ENCODE measurements at regions of chr4 and their contacts with region 1.

Region 1: GRCh38 chr4:122151982-122152710 is at the start of gene BLTP1:
- DNase-seq: peak; percentile 73 to 94 (median 84)
- ATAC-seq: peak; percentile 88
- H3K4me3 ChIP-seq: peak within 1 kb of the TSS; percentile 93
- H3K4me3 Mint-ChIP-seq: peak within 1 kb of the TSS; percentile 94
- H3K27ac ChIP-seq: peak within 1 kb of the TSS; percentile 81 to 89
- H3K27ac Mint-ChIP-seq: peak within 1 kb of the TSS; percentile 94
- H3K4me1 ChIP-seq: peaks cover 11% of the 10 kb centered on the region
- H3K4me1 Mint-ChIP-seq: peaks cover 77% of the 10 kb centered on the region
- H3K27me3 ChIP-seq: no peaks in the 10 kb centered on the region
- H3K27me3 Mint-ChIP-seq: no peaks in the 10 kb centered on the region
- CTCF ChIP-seq: no peak
- total RNA-seq, gene BLTP1: 86.9 to 93.6 TPM

Region 2: DNA sequence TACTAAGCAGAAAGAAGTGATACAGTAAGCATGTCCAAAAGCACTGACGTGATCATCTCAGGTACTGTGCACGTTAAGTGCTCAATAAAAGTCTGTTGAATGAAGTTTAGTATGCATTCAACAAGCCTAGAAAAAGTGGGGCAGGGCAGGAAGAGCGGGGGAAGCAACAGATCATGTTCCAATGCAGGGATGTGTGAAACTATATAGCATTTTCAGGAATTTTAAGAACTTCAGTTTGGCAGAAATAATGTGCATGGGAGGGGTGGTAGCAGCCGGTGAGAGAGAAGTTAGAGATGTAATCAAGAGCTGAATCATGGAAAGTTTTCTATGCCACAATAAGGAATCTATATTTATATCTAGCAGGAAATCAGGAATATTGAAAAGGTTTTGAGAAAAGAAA is 309.3 kb before region 1 on chr4:
- CTCF ChIA-PET with region 1: no interaction called
- POLR2A ChIA-PET with region 1: no interaction called
- intact Hi-C with region 1: no loop called
- DNase-seq: no peak
- ATAC-seq: no peak
- H3K4me3 ChIP-seq: no peak overlapping the region
- H3K4me3 Mint-ChIP-seq: no peak overlapping the region
- H3K27ac ChIP-seq: no peak overlapping the region
- H3K27ac Mint-ChIP-seq: no peak overlapping the region
- H3K4me1 ChIP-seq: no peaks in the 10 kb centered on the region
- H3K4me1 Mint-ChIP-seq: no peaks in the 10 kb centered on the region
- H3K27me3 ChIP-seq: no peaks in the 10 kb centered on the region
- H3K27me3 Mint-ChIP-seq: no peaks in the 10 kb centered on the region
- CTCF ChIP-seq: no peak

Region 3: DNA sequence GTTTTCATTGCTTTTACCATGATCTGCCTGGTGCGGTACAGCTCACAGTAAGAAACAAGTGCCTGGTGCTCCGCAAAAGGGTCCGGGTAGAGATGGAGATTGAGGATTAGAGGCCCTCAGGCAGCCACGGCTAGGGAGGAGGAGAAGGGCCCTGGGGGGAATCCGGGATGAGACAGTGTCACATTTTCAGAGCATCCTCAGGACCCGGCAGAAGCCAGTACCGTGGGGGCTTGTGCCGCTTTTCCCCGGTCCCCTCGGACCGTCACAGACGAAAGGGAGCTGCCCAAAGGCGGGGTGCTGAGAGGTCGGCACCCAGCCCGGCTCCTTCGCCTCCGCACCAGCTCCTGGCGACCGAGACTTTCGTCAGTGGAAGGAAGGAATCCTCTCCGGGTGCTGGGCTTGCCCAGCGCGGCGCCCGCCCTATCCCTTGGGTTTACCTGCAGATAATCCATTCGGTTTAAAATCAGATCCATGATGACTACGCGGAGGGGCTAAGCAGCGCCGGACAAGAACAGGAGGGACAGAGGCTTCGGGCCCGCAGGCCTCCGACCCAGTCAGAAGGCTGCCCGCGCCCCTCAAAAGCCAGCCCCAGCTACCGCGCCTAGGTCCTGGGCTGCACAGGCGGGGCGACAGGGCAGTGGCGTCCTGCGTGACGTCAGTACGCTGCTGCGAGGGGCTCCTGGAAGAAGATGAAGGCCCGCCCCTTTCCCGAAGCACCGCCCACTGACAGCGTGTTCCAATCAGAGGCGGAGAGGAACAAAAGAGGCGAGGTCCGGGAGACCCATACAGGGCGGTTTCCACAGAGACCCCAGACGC is 282.1 kb before region 1 on chr4 and contains the start of gene BBS7:
- CTCF ChIA-PET with region 1: no interaction called
- POLR2A ChIA-PET with region 1: interaction called, 3 read pairs
- intact Hi-C with region 1: loop called in 1 of 2 experiments (anchors 5 kb)
- DNase-seq: peak; percentile 84 to 100 (median 96)
- ATAC-seq: peak; percentile 98
- H3K4me3 ChIP-seq: peak within 1 kb of the TSS; percentile 80
- H3K4me3 Mint-ChIP-seq: peak within 1 kb of the TSS; percentile 99
- H3K27ac ChIP-seq: peak within 1 kb of the TSS in 1 of 2 donors; percentile 71
- H3K27ac Mint-ChIP-seq: peak within 1 kb of the TSS; percentile 87
- H3K4me1 ChIP-seq: peaks cover 12% of the 10 kb centered on the region
- H3K4me1 Mint-ChIP-seq: peaks cover 26% of the 10 kb centered on the region
- H3K27me3 ChIP-seq: peaks cover 0 to 8% of the 10 kb centered on the region in 2 experiments
- H3K27me3 Mint-ChIP-seq: peaks cover 20% of the 10 kb centered on the region
- CTCF ChIP-seq: no peak
- total RNA-seq, gene BBS7: 3.0 to 3.8 TPM

Region 4: GRCh38 chr4:121950212-121950679 is 201.9 kb before region 1 on chr4:
- CTCF ChIA-PET with region 1: no interaction called
- POLR2A ChIA-PET with region 1: no interaction called
- intact Hi-C with region 1: loop called (anchors 5 to 10 kb)
- DNase-seq: peak; percentile 67 to 89 (median 80)
- ATAC-seq: peak; percentile 80
- H3K4me3 ChIP-seq: peak overlapping the region; percentile 73
- H3K4me3 Mint-ChIP-seq: peak overlapping the region; percentile 84
- H3K27ac ChIP-seq: no peak overlapping the region
- H3K27ac Mint-ChIP-seq: no peak overlapping the region
- H3K4me1 ChIP-seq: peaks cover 16% of the 10 kb centered on the region
- H3K4me1 Mint-ChIP-seq: peaks cover 9% of the 10 kb centered on the region
- H3K27me3 ChIP-seq: peaks cover 10 to 28% of the 10 kb centered on the region in 2 experiments
- H3K27me3 Mint-ChIP-seq: peaks cover 62% of the 10 kb centered on the region
- CTCF ChIP-seq: peak; percentile 81

Region 5: GRCh38 chr4:122131562-122132157 is 20.5 kb before region 1 on chr4:
- CTCF ChIA-PET with region 1: interaction called, 4 read pairs
- POLR2A ChIA-PET with region 1: interaction called, 31 read pairs
- intact Hi-C with region 1: no loop called
- DNase-seq: peak in 4 of 14 experiments; percentile 5 to 81 (median 42)
- ATAC-seq: peak; percentile 78
- H3K4me3 ChIP-seq: no peak overlapping the region
- H3K4me3 Mint-ChIP-seq: no peak overlapping the region
- H3K27ac ChIP-seq: peak overlapping the region in 1 of 2 donors; percentile 71
- H3K27ac Mint-ChIP-seq: peak overlapping the region; percentile 62
- H3K4me1 ChIP-seq: peaks cover 3% of the 10 kb centered on the region
- H3K4me1 Mint-ChIP-seq: peaks cover 22% of the 10 kb centered on the region
- H3K27me3 ChIP-seq: no peaks in the 10 kb centered on the region
- H3K27me3 Mint-ChIP-seq: no peaks in the 10 kb centered on the region
- CTCF ChIP-seq: no peak

Region 6: GRCh38 chr4:122914292-122914904 is 762.3 kb after region 1 on chr4:
- CTCF ChIA-PET with region 1: no interaction called
- POLR2A ChIA-PET with region 1: no interaction called
- intact Hi-C with region 1: loop called in 1 of 2 experiments (anchors 10 kb)
- DNase-seq: peak in 3 of 14 experiments; percentile 6 to 61 (median 41)
- ATAC-seq: peak; percentile 75
- H3K4me3 ChIP-seq: no peak overlapping the region
- H3K4me3 Mint-ChIP-seq: no peak overlapping the region
- H3K27ac ChIP-seq: no peak overlapping the region
- H3K27ac Mint-ChIP-seq: no peak overlapping the region
- H3K4me1 ChIP-seq: no peaks in the 10 kb centered on the region
- H3K4me1 Mint-ChIP-seq: no peaks in the 10 kb centered on the region
- H3K27me3 ChIP-seq: no peaks in the 10 kb centered on the region
- H3K27me3 Mint-ChIP-seq: no peaks in the 10 kb centered on the region
- CTCF ChIP-seq: peak; percentile 76